Mucosa of descending colon (tissue), 3 donors: ENCODE measurements at regions of chr11 and their contacts with region 1.

Region 1: DNA sequence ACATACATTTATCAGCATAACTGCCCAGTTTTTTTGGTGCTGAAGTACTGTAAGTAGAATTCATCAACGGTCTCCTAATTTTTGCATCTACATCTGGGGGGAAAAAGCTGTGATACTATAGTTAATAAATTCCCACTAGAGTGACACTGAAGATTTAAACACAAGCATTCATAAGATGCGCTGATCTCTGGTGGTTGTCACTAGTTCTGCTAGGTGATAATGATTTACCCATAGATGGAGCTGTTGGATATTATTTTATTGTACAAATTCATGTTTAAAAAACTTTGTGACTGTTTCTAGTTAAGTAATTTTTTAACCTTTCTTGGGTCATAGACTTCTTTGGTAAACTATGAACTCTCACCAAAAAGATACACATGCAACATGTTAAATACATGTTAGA is 106.6 kb downstream of the EMSY start:
- DNase-seq: no peak
- ATAC-seq: no peak
- H3K4me3 ChIP-seq: no peak overlapping the region
- H3K4me1 ChIP-seq: peaks cover 14% of the 10 kb centered on the region
- CTCF ChIP-seq: peak; percentile 9

Region 2: GRCh38 chr11:76592025-76592914 is 40.9 kb after region 1 on chr11:
- intact Hi-C with region 1: loop called in 1 of 2 experiments (anchors 5 kb)
- DNase-seq: peak; percentile 64 to 75 (median 71)
- ATAC-seq: peak; percentile 61
- H3K4me3 ChIP-seq: no peak overlapping the region
- H3K4me1 ChIP-seq: peaks cover 21% of the 10 kb centered on the region
- CTCF ChIP-seq: no peak

Region 3: GRCh38 chr11:76680518-76681425 is 129.4 kb after region 1 on chr11:
- intact Hi-C with region 1: loop called in 1 of 2 experiments (anchors 10 kb)
- DNase-seq: peak in 2 of 3 donors; percentile 76 to 79
- ATAC-seq: peak; percentile 79
- H3K4me3 ChIP-seq: no peak overlapping the region
- H3K4me1 ChIP-seq: no peaks in the 10 kb centered on the region
- CTCF ChIP-seq: peak; percentile 56

Region 4: DNA sequence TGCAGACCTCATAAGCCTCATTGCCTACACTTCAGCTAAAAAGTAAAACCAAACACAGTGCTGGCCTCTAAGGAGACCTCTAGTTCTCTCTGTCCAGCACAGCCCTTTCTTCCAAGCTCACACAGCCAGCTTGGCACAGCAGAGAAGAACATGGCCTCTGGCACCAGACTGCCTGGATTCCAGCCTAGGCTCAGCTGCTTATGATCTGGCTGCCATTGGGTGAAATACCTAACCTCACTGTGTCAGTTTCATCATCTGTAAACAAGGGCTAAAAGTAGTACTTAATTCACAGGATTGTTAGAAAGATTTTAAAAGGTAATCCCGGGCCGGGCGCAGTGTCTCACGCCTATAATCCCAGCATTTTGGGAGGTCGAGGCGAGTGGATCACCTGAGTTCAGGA is 299.4 kb after region 1 on chr11:
- intact Hi-C with region 1: no loop called
- DNase-seq: no peak
- ATAC-seq: no peak
- H3K4me3 ChIP-seq: no peak overlapping the region
- H3K4me1 ChIP-seq: no peaks in the 10 kb centered on the region
- CTCF ChIP-seq: no peak